ENCODE measurements at regions of chr16 and their contacts with region 1.

Region 1: GRCh38 chr16:80174418-80174817 is 366.4 kb upstream of the DYNLRB2 start:
- DNase-seq: no peak
- H3K4me3 ChIP-seq: no peak overlapping the region
- H3K27ac ChIP-seq: no peak overlapping the region
- H3K4me1 ChIP-seq: no peaks in the 10 kb centered on the region
- H3K27me3 ChIP-seq: peaks cover 8% of the 10 kb centered on the region
- CTCF ChIP-seq: no peak

Region 2: GRCh38 chr16:80045861-80046260 is 128.6 kb before region 1 on chr16:
- intact Hi-C with region 1: no loop called
- DNase-seq: no peak
- H3K4me3 ChIP-seq: peak overlapping the region; percentile 6
- H3K27ac ChIP-seq: no peak overlapping the region
- H3K4me1 ChIP-seq: peaks cover 12% of the 10 kb centered on the region
- H3K27me3 ChIP-seq: peaks cover 30% of the 10 kb centered on the region
- CTCF ChIP-seq: no peak

Region 3: DNA sequence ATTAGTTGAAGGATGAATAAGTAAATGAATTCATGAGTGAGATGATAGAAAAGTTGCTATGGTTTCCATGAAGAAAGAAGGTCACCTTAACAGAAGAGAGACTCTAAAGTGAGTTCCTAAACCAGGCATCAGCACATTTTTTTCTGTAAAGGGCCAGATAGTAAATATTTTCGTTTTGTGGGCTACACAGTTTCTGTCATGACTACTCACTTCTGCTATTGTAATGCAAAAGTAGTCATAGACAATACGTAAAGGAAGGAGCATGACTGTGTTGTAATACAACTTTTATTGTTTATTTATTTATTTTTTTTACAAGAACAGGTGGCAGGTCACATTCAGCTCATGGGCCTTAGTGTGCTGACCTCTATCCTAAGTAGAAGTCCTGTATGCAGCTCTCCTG is 59.7 kb before region 1 on chr16:
- intact Hi-C with region 1: loop called (anchors 10 kb)
- DNase-seq: no peak
- H3K4me3 ChIP-seq: no peak overlapping the region
- H3K27ac ChIP-seq: no peak overlapping the region
- H3K4me1 ChIP-seq: no peaks in the 10 kb centered on the region
- H3K27me3 ChIP-seq: peaks cover 29% of the 10 kb centered on the region
- CTCF ChIP-seq: no peak

Region 4: DNA sequence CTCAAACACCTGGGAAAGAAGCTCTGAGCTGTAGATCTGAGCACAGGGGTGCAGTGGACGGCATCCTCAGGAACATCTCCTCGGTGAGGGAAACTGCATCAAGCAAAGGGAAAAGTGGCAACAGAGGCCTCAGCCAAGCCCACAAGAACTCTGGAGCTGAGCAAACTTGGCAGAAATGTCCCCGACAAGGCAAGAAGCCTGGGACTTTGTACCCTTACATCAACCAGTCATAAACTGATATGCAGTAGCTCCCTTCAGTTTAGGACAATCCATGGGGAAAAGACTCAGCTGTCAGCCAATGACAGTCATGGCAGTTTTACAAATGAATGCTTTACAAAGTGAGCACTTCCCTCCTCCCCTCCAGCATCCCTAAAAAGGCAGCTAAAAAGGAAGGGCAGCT is 156.4 kb after region 1 on chr16:
- intact Hi-C with region 1: no loop called
- DNase-seq: no peak
- H3K4me3 ChIP-seq: no peak overlapping the region
- H3K27ac ChIP-seq: no peak overlapping the region
- H3K4me1 ChIP-seq: no peaks in the 10 kb centered on the region
- H3K27me3 ChIP-seq: peaks cover 23% of the 10 kb centered on the region
- CTCF ChIP-seq: no peak